Activated CD8-positive, alpha-beta T cell treated with anti-CD3 and anti-CD28 coated beads for 36 hours (primary cell): ENCODE measurements at regions of chrX and their contacts with region 1.

Region 1: DNA sequence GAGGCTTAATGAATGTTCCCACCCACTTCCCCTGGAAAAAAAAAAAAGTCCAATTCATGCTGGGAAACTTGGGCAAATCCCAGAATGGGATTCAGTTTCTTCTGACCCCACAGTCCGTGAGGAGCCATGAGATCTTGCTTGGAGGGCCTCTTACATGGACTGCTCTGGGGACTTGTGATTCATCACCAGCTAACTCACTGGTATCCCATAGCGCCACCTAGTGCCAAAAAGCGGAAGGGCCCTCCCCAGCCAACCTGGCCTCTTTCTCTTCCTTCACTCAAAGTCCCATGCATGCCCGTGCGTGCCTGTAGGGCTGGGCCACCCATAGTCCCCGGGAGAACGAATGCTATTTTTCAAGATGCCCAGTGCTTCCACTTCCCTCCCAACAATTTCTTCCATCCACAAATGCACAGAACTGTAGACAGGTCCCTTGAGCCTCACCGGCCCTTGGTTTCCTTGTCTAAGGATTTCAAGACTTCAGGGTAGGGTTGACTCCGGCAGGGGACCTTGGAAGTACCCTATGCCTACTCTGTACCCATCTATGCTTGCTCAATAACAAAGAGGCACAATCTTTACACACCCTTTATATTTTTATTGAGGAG is 5.1 kb downstream of the RTL5 start:
- DNase-seq: peak; percentile 90
- ATAC-seq: peak; percentile 81
- H3K4me3 Mint-ChIP-seq: no peak overlapping the region
- H3K27ac Mint-ChIP-seq: no peak overlapping the region
- H3K4me1 Mint-ChIP-seq: peaks cover 15% of the 10 kb centered on the region
- H3K27me3 Mint-ChIP-seq: peaks cover 29% of the 10 kb centered on the region
- CTCF ChIP-seq: peak; percentile 62

Region 2: DNA sequence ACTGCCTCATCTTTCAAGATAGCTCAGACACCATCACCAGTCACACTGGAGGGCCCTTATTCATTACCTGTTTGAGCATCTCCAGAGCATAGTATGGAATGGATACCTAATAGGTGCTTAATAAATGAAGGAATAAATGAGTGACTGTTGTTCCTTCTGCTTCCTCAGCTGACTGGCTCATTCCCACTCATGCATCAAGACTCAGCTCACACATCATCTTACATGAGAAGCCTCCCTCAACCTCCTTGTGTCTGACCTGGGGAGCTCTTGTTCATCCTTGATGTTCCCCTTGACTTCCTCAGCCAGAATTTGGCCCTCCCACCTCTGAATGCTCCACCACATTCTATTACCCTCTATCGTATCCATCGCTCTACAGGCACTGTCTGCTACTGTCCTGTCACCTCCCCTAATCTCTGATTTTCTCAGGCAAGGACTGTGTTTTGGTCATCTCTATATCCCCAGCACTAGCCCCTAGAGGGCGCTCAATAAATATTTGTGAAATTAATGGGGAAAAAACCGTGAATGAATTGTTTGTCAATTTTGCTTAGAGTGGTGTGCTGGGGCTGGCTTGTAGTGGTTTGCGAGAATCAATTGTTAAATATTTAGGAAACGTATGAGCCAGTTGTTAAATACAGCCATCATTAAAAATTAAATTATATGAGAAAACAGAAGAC is 127.7 kb before region 1 on chrX:
- CTCF ChIA-PET with region 1: interaction called, 12 read pairs
- POLR2A ChIA-PET with region 1: no interaction called
- intact Hi-C with region 1: loop called (anchors 2 kb)
- DNase-seq: peak; percentile 51
- ATAC-seq: peak; percentile 49
- H3K4me3 Mint-ChIP-seq: no peak overlapping the region
- H3K27ac Mint-ChIP-seq: no peak overlapping the region
- H3K4me1 Mint-ChIP-seq: no peaks in the 10 kb centered on the region
- H3K27me3 Mint-ChIP-seq: peaks cover 3% of the 10 kb centered on the region
- CTCF ChIP-seq: peak; percentile 52